ENCODE measurements at regions of chr9 and their contacts with region 1.

Region 1: GRCh38 chr9:112097712-112098688 is 77.1 kb downstream of the SUSD1 start:
- DNase-seq: peak; percentile 76
- H3K4me3 ChIP-seq: no peak overlapping the region
- H3K27ac ChIP-seq: no peak overlapping the region
- H3K4me1 ChIP-seq: no peaks in the 10 kb centered on the region
- H3K27me3 ChIP-seq: no peaks in the 10 kb centered on the region
- CTCF ChIP-seq: peak; percentile 83 to 85
- POLR2A ChIP-seq: no peak

Region 2: GRCh38 chr9:111798786-111799185 is 299.2 kb before region 1 on chr9:
- CTCF ChIA-PET with region 1: no interaction called
- POLR2A ChIA-PET with region 1: no interaction called
- dilution Hi-C with region 1: no loop called
- intact Hi-C with region 1: no loop called
- DNase-seq: no peak
- H3K4me3 ChIP-seq: no peak overlapping the region
- H3K27ac ChIP-seq: no peak overlapping the region
- H3K4me1 ChIP-seq: no peaks in the 10 kb centered on the region
- H3K27me3 ChIP-seq: no peaks in the 10 kb centered on the region
- CTCF ChIP-seq: no peak
- POLR2A ChIP-seq: no peak

Region 3: GRCh38 chr9:112112941-112113681 is 15.1 kb after region 1 on chr9:
- CTCF ChIA-PET with region 1: interaction called, 19 read pairs
- POLR2A ChIA-PET with region 1: no interaction called
- dilution Hi-C with region 1: no loop called
- intact Hi-C with region 1: no loop called
- DNase-seq: no peak
- H3K4me3 ChIP-seq: no peak overlapping the region
- H3K27ac ChIP-seq: peak overlapping the region; percentile 48
- H3K4me1 ChIP-seq: peaks cover 13% of the 10 kb centered on the region
- H3K27me3 ChIP-seq: no peaks in the 10 kb centered on the region
- CTCF ChIP-seq: peak; percentile 27 to 28
- POLR2A ChIP-seq: no peak

Region 4: DNA sequence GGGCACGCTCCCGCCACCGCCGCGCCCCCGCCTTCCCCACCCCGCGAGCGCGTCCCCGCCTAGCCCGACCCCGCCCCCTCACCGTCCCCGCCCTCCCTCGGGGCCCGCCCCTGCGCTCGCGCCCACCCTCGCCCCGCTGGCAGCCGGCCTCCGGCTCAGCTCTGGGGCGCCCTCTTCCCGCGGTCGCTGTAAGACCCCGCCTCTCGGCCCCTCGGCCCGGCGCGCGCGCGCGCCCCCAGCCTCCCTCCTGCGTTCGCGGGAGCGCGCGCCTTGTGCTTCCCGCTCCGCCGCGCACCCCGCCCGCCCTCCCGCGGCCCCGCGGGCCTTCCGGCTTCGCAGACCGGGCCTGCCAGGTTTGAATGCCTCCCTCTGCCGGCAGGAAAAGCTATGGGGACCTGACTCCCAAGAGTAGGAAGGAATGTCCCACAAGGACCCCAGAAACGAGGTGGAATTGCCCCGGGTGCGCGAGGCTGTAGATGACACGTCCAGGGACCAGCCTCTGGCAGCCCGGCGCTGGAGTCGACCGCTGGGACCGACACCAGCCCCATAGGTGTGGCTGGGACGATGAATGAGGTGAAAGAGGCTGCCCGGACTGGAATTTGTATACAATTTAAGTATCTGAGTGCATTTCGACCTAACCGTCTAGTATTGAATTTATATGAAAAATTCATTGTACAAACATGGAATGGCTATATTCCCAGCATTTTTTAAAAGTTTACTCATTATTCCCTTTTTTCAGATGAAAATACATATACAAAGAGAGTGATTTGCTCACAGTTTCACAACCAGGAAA is 235.8 kb after region 1 on chr9:
- CTCF ChIA-PET with region 1: interaction called, 24 read pairs
- POLR2A ChIA-PET with region 1: no interaction called
- dilution Hi-C with region 1: no loop called
- intact Hi-C with region 1: loop called (anchors 1 kb)
- DNase-seq: peak; percentile 94
- H3K4me3 ChIP-seq: peak overlapping the region; percentile 71 to 95 (median 88)
- H3K27ac ChIP-seq: peak overlapping the region; percentile 87
- H3K4me1 ChIP-seq: peaks cover 18% of the 10 kb centered on the region
- H3K27me3 ChIP-seq: no peaks in the 10 kb centered on the region
- CTCF ChIP-seq: peak; percentile 26 to 51
- POLR2A ChIP-seq: no peak

Region 5: GRCh38 chr9:112379177-112380101 is 281.4 kb after region 1 on chr9:
- CTCF ChIA-PET with region 1: interaction called, 17 read pairs
- POLR2A ChIA-PET with region 1: no interaction called
- dilution Hi-C with region 1: no loop called
- intact Hi-C with region 1: no loop called
- DNase-seq: peak; percentile 99
- H3K4me3 ChIP-seq: peak overlapping the region; percentile 79 to 98 (median 87)
- H3K27ac ChIP-seq: peak overlapping the region; percentile 94
- H3K4me1 ChIP-seq: peaks cover 16% of the 10 kb centered on the region
- H3K27me3 ChIP-seq: no peaks in the 10 kb centered on the region
- CTCF ChIP-seq: peak in 1 of 2 donors; percentile 5
- POLR2A ChIP-seq: peak; percentile 96

Measured in endothelial cell of umbilical vein (primary cell).